ENCODE measurements at regions of chr2 and their contacts with region 1.

Region 1: GRCh38 chr2:96801005-96801785 is 14.9 kb upstream of the CNNM3 start:
- DNase-seq: peak; percentile 88

Region 2: DNA sequence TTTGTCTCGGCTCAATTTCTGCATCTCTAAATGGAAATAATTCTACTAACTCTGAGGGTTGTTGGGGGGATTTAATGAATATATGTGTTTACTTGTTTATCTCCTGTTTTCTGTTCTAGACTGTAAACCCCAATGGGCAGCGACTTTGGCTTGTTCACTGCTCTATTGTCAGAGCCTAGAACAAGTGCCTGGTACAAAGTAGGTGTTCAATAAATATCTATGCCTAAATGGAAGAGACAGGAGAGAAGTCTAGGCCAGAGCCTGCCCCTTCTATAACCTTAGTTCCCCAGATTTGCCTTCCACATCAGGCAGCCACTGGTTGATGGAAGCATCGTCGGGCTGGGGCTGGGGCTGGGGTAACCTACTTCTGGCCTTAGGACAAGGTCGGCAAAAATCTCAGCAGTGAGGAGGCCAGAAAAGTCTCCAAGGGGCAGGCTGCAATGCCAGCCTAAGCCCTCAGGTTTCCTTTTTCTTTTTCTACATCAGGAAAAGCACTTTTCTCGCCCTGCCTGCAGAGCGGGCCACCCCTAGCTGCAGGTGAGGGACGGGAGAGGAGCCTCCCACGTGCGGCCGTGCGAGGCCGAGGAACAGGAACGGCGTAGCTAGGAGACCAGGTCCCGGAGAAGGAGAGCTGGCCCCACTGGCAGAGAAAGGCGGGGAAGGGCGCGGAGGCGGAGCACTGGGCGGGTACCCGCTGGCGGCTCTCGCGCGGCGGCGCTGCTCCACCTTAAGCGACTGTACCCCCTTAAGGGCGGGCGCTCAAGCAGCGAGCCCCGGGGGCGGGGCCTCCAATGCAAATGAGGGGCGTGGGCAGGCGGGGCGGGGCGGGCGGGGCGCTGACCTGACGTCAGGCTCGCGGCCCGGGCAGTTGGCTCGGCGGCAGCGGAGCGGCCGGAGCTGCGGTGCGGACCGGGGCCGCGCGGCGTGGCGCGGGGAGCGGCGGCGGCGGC is 40.9 kb before region 1 on chr2 and contains the start of gene CNNM4:
- intact Hi-C with region 1: loop called (anchors 2 kb)
- DNase-seq: peak; percentile 97
- total RNA-seq, gene CNNM4: 36.8 TPM